ENCODE measurements at regions of chr6 and their contacts with region 1.

Region 1: GRCh38 chr6:133952815-133953633 is at the start of gene TBPL1:
- DNase-seq: peak; percentile 90
- ATAC-seq: peak; percentile 88
- H3K4me3 ChIP-seq: peak within 1 kb of the TSS; percentile 88
- H3K27ac ChIP-seq: peak within 1 kb of the TSS; percentile 74
- H3K4me1 ChIP-seq: peaks cover 11% of the 10 kb centered on the region
- H3K27me3 ChIP-seq: no peaks in the 10 kb centered on the region
- CTCF ChIP-seq: no peak
- EP300 ChIP-seq: peak in 1 of 2 experiments; percentile 62; a peak in 1 of 4 replicates
- POLR2A ChIP-seq: peak; percentile 94
- RAD21 ChIP-seq: no peak
- polyA plus RNA-seq, gene TBPL1: 34.9 to 52.5 TPM

Region 2: GRCh38 chr6:132512638-132513632 is 1440.1 kb before region 1 on chr6 and contains the start of gene STX7:
- CTCF ChIA-PET with region 1: no interaction called
- POLR2A ChIA-PET with region 1: no interaction called
- RAD21 ChIA-PET with region 1: no interaction called
- SMC1A ChIA-PET with region 1: no interaction called
- in situ Hi-C with region 1: no loop called
- intact Hi-C with region 1: loop called (anchors 10 kb)
- DNase-seq: peak; percentile 48
- ATAC-seq: peak; percentile 91
- H3K4me3 ChIP-seq: peak within 1 kb of the TSS; percentile 61
- H3K27ac ChIP-seq: peak within 1 kb of the TSS; percentile 63
- H3K4me1 ChIP-seq: peaks cover 6% of the 10 kb centered on the region
- H3K27me3 ChIP-seq: no peaks in the 10 kb centered on the region
- CTCF ChIP-seq: no peak
- EP300 ChIP-seq: no peak
- POLR2A ChIP-seq: peak; percentile 77
- RAD21 ChIP-seq: no peak
- polyA plus RNA-seq, gene STX7: 26.5 to 30.7 TPM

Region 3: DNA sequence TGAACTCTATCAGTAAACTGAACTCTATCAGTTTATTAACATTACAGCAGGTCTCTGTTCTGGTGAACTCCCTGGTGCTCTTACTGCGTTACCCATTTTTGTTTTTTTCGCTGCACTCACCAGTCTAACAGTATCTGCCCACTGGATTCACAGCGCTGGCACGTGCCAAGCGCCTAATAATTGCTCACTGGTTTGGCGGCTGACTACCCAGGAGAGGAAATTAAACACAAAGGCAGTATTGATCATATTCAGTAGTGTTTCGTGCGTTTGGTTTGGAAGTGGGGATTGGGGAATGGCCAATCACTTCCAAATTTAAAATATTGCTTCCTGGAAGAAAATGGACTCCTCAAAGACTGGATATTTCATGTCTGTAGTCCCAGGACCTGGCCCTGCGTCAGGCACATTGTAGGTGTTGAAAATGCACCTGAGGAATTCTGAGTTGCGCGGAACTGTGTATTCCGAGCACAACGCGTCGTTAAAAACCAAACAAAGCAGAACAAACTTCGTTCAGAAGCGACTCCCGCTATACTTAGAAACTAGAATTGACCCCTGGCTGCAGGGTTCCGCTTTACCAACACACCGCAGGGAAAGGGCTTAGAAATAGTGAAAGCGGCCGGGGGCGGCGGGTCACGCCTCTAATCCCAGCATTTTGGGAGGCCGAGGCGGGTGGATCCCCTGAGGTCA is 1139.7 kb before region 1 on chr6:
- CTCF ChIA-PET with region 1: no interaction called
- POLR2A ChIA-PET with region 1: no interaction called
- RAD21 ChIA-PET with region 1: no interaction called
- SMC1A ChIA-PET with region 1: interaction called, 3 read pairs
- in situ Hi-C with region 1: no loop called
- intact Hi-C with region 1: loop called (anchors 2 kb)
- DNase-seq: no peak
- ATAC-seq: peak; percentile 52
- H3K4me3 ChIP-seq: peak overlapping the region; percentile 85
- H3K27ac ChIP-seq: peak overlapping the region; percentile 96
- H3K4me1 ChIP-seq: peaks cover 6% of the 10 kb centered on the region; the same call in 1 of the 2 replicates
- H3K27me3 ChIP-seq: peaks cover 0 to 5% of the 10 kb centered on the region in 2 experiments; a peak in 1 of 4 replicates
- CTCF ChIP-seq: no peak
- EP300 ChIP-seq: no peak
- POLR2A ChIP-seq: peak; percentile 23; the same call in 1 of the 2 replicates
- RAD21 ChIP-seq: no peak

Region 4: GRCh38 chr6:133688705-133689492 is 264.1 kb before region 1 on chr6:
- CTCF ChIA-PET with region 1: no interaction called
- POLR2A ChIA-PET with region 1: no interaction called
- RAD21 ChIA-PET with region 1: no interaction called
- SMC1A ChIA-PET with region 1: no interaction called
- in situ Hi-C with region 1: no loop called
- intact Hi-C with region 1: no loop called
- DNase-seq: no peak
- ATAC-seq: no peak
- H3K4me3 ChIP-seq: no peak overlapping the region
- H3K27ac ChIP-seq: no peak overlapping the region
- H3K4me1 ChIP-seq: no peaks in the 10 kb centered on the region
- H3K27me3 ChIP-seq: no peaks in the 10 kb centered on the region
- CTCF ChIP-seq: no peak
- EP300 ChIP-seq: no peak
- POLR2A ChIP-seq: no peak
- RAD21 ChIP-seq: no peak

Region 5: GRCh38 chr6:133966654-133967329 is 13.8 kb after region 1 on chr6:
- CTCF ChIA-PET with region 1: interaction called, 13 read pairs
- POLR2A ChIA-PET with region 1: interaction called, 8 read pairs
- RAD21 ChIA-PET with region 1: interaction called, 6 read pairs
- SMC1A ChIA-PET with region 1: interaction called, 32 read pairs
- in situ Hi-C with region 1: no loop called
- intact Hi-C with region 1: no loop called
- DNase-seq: peak; percentile 34
- ATAC-seq: peak; percentile 85
- H3K4me3 ChIP-seq: peak overlapping the region; percentile 4; the same call in 1 of the 2 replicates
- H3K27ac ChIP-seq: peak overlapping the region; percentile 30
- H3K4me1 ChIP-seq: peaks cover 14% of the 10 kb centered on the region; the same call in 1 of the 2 replicates
- H3K27me3 ChIP-seq: no peaks in the 10 kb centered on the region
- CTCF ChIP-seq: no peak
- EP300 ChIP-seq: no peak
- POLR2A ChIP-seq: no peak
- RAD21 ChIP-seq: no peak

Region 6: GRCh38 chr6:133973109-133973971 is 20.3 kb after region 1 on chr6:
- CTCF ChIA-PET with region 1: interaction called, 28 read pairs
- POLR2A ChIA-PET with region 1: interaction called, 5 read pairs
- RAD21 ChIA-PET with region 1: interaction called, 5 read pairs
- SMC1A ChIA-PET with region 1: interaction called, 14 read pairs
- in situ Hi-C with region 1: no loop called
- intact Hi-C with region 1: loop called (anchors 2 kb)
- DNase-seq: peak; percentile 28
- ATAC-seq: peak; percentile 75
- H3K4me3 ChIP-seq: no peak overlapping the region
- H3K27ac ChIP-seq: no peak overlapping the region
- H3K4me1 ChIP-seq: no peaks in the 10 kb centered on the region
- H3K27me3 ChIP-seq: no peaks in the 10 kb centered on the region
- CTCF ChIP-seq: peak; percentile 51 to 68 (median 65); a peak in 5 of 6 replicates
- EP300 ChIP-seq: no peak
- POLR2A ChIP-seq: no peak
- RAD21 ChIP-seq: peak; percentile 72

Region 7: GRCh38 chr6:134041093-134041492 is 88.1 kb after region 1 on chr6:
- CTCF ChIA-PET with region 1: no interaction called
- POLR2A ChIA-PET with region 1: no interaction called
- RAD21 ChIA-PET with region 1: no interaction called
- SMC1A ChIA-PET with region 1: no interaction called
- in situ Hi-C with region 1: no loop called
- intact Hi-C with region 1: no loop called
- DNase-seq: no peak
- ATAC-seq: no peak
- H3K4me3 ChIP-seq: no peak overlapping the region
- H3K27ac ChIP-seq: no peak overlapping the region
- H3K4me1 ChIP-seq: no peaks in the 10 kb centered on the region
- H3K27me3 ChIP-seq: no peaks in the 10 kb centered on the region
- CTCF ChIP-seq: no peak
- EP300 ChIP-seq: no peak
- POLR2A ChIP-seq: no peak
- RAD21 ChIP-seq: no peak